Gastrocnemius medialis (tissue), 4 donors: ENCODE measurements at regions of chr21 and their contacts with region 1.

Region 1: DNA sequence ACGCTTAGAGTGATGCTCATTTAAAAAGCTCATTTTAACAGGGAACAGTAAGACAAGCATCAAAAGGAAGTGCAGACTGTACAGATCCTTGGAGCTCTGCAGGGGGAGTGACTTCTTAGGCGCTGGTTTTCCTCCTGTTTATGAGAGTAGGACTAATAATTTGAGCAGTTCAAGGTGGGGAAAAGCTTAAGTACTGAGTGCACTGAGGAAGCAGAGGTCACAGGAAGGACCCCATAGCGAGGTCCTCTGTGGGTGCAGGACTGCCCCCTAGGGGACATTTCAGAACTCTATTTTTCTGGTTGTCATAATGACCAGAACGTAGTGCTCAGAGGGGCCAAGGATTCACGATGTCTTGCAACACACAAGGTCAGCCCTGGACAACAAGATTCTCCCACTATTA is 112.1 kb downstream of the HLCS start:
- DNase-seq: no peak
- ATAC-seq: peak in 1 of 2 donors; percentile 66
- H3K4me3 ChIP-seq: no peak overlapping the region
- H3K27ac ChIP-seq: no peak overlapping the region
- H3K4me1 ChIP-seq: peaks cover 3 to 5% of the 10 kb centered on the region in 2 donors
- H3K27me3 ChIP-seq: no peaks in the 10 kb centered on the region
- CTCF ChIP-seq: peak in 4 of 5 experiments; percentile 9 to 62 (median 45)
- POLR2A ChIP-seq: no peak

Region 2: DNA sequence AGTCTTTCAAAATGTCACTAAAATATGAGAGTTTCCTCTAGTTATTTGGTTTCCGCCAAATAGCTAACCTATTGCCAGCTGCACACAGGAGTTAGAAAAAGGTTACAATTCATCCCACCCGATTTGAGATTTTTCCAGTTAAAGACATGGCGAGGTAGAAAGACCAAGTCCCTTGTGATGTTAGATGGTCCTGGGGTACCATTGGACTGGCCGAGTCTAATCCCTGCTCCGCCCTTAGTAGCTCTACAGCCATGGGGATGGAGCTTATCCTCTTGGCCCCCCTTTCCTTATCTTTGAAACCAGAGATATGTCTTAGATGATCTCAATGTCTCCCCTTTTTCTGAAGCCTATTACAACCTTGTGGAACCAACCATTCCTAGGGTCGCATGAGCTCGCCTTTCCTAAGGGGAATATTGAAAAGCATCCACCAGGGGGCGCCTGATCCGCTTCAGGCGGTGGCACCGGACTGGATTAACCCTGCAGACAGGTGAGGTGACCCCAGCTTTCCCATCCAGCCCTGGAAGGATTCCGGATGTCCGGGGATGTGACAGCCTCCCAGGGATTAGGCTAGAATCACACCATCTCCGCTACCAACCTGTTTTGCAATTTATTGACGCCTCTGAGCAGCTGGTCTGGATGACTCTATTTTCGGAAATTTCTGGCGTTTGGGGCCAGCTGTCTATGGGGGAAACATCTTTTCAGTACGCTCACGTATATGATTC is 223.7 kb before region 1 on chr21:
- in situ Hi-C with region 1: no loop called
- intact Hi-C with region 1: loop called (anchors 10 kb)
- DNase-seq: peak; percentile 11 to 40
- ATAC-seq: peak in 1 of 2 donors; percentile 80
- H3K4me3 ChIP-seq: no peak overlapping the region
- H3K27ac ChIP-seq: no peak overlapping the region
- H3K4me1 ChIP-seq: peaks cover 0 to 6% of the 10 kb centered on the region in 2 donors
- H3K27me3 ChIP-seq: no peaks in the 10 kb centered on the region
- CTCF ChIP-seq: peak; percentile 44 to 78 (median 75)
- POLR2A ChIP-seq: no peak

Region 3: GRCh38 chr21:36747815-36748383 is 106.5 kb before region 1 on chr21:
- in situ Hi-C with region 1: no loop called
- intact Hi-C with region 1: loop called (anchors 5 kb)
- DNase-seq: no peak
- ATAC-seq: peak; percentile 66 to 72
- H3K4me3 ChIP-seq: peak overlapping the region; percentile 16 to 52 (median 38)
- H3K27ac ChIP-seq: no peak overlapping the region
- H3K4me1 ChIP-seq: peaks cover 5 to 9% of the 10 kb centered on the region in 2 donors
- H3K27me3 ChIP-seq: no peaks in the 10 kb centered on the region
- CTCF ChIP-seq: peak in 2 of 5 experiments; percentile 15 to 31
- POLR2A ChIP-seq: no peak